Activated T-helper 2 cell treated with anti-CD3 and anti-CD28 coated beads, Interferon-gamma antibody, Interleukin-2, Interleukin-4, amounts not matched to agents 10 μg/mL and 5 μg/mL and 100 μg/mL, durations not matched to agents 14 hours and 24 hours and 36 hours (primary cell): ENCODE measurements at regions of chr12 and their contacts with region 1.

Region 1: DNA sequence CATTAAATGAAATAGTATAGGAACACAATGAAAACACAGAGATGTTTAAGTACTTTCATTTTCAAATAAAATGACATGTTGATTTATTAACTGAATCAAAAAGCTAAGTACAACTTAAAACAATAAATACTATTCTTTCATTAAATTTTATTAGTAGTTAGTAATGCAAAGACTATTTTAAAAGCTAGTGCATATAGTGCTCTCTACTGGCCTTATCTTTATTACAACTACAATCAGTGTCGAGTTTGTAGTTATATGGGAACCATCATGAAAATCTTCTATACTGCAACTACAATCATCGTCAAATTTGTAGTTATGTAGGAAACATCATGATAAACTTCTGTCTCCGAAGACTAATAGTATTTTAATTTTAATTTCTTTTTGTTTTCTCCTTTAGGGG is 8.9 kb upstream of the LIN7A start:
- DNase-seq: no peak
- H3K4me3 Mint-ChIP-seq: no peak overlapping the region
- H3K27ac Mint-ChIP-seq: no peak overlapping the region
- H3K4me1 Mint-ChIP-seq: no peaks in the 10 kb centered on the region
- H3K27me3 Mint-ChIP-seq: no peaks in the 10 kb centered on the region

Region 2: GRCh38 chr12:80681287-80681686 is 265.3 kb before region 1 on chr12:
- intact Hi-C with region 1: no loop called
- DNase-seq: no peak
- H3K4me3 Mint-ChIP-seq: no peak overlapping the region
- H3K27ac Mint-ChIP-seq: no peak overlapping the region
- H3K4me1 Mint-ChIP-seq: no peaks in the 10 kb centered on the region
- H3K27me3 Mint-ChIP-seq: no peaks in the 10 kb centered on the region

Region 3: DNA sequence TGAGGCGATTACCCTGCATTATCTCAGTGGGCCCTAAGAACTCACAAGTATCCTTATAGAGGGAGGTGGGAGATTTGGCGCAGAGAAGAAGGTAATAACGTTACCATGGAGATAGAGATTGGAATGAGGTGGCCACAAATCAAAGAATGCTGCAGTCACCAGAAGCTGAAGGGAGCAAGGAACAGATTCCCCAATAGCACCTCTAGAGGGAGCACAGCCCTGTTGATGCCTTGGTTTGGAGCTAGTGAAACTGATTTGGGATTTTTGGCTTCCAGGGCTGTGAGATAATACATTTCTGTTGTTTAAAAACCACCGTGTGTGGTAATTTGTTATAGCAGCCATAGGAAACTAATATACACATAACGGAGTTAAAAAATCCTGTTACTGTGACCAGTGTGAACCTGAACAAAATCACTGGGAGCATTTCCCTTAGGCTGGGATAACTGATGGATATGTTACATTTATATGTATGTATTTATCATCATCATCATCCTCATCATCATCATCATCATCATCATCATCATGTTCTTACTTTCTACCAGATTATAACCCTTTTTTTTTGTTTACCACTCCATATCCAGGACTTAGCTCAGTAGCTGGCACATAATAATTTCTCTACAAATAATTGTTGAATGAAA is 109.1 kb before region 1 on chr12:
- intact Hi-C with region 1: loop called (anchors 10 kb)
- DNase-seq: no peak
- H3K4me3 Mint-ChIP-seq: no peak overlapping the region
- H3K27ac Mint-ChIP-seq: no peak overlapping the region
- H3K4me1 Mint-ChIP-seq: no peaks in the 10 kb centered on the region
- H3K27me3 Mint-ChIP-seq: no peaks in the 10 kb centered on the region

Region 4: DNA sequence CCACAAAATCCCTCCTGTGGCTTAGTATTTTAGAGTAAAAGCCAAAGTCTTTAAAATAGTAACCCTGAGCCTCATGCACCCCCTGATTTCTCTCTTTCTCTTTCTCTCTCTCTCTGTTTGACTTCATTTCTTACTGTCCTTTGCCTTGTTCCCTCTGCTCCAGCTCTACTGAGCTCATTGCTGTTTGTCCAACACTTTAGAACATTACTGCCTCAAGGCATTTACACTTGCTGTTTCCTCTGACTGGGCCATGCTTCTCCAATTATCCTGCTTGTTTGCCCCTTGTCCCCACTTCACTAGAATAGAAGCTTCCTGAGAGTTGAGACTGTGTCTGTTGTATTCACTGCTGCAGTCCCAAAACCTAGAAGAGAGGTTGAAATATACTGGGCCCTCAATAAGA is 30.3 kb before region 1 on chr12:
- intact Hi-C with region 1: no loop called
- DNase-seq: no peak
- H3K4me3 Mint-ChIP-seq: no peak overlapping the region
- H3K27ac Mint-ChIP-seq: no peak overlapping the region
- H3K4me1 Mint-ChIP-seq: no peaks in the 10 kb centered on the region
- H3K27me3 Mint-ChIP-seq: no peaks in the 10 kb centered on the region

Region 5: DNA sequence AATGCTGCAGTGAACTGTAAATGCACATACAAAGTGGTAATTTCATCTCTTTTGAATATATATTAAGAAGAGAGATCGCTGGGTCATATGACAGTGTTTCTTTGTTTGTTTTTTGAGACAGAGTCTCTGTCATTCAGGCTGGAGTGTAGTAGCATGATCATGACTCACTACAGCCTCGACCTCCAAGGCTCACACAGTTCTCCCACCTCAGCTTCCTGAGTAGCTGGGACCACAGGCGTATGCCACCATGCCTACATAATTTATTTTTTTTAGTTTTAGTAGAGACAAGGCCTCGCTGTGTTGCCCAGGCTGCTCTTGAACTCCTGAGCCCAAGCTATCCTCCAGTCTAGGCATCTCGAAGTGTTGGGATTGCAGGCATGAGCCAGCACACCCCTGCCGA is 68.9 kb after region 1 on chr12:
- intact Hi-C with region 1: no loop called
- DNase-seq: no peak
- H3K4me3 Mint-ChIP-seq: no peak overlapping the region
- H3K27ac Mint-ChIP-seq: no peak overlapping the region
- H3K4me1 Mint-ChIP-seq: no peaks in the 10 kb centered on the region
- H3K27me3 Mint-ChIP-seq: no peaks in the 10 kb centered on the region